PC-3 (cell line): ENCODE measurements at regions of chr19 and their contacts with region 1.

Region 1: GRCh38 chr19:5904352-5905113 is at the start of gene VMAC:
- DNase-seq: peak; percentile 100
- ATAC-seq: peak; percentile 78
- H3K4me3 ChIP-seq: peak within 1 kb of the TSS; percentile 94
- H3K27ac ChIP-seq: peak within 1 kb of the TSS; percentile 82
- H3K4me1 ChIP-seq: peaks cover 9% of the 10 kb centered on the region
- H3K27me3 ChIP-seq: no peaks in the 10 kb centered on the region
- CTCF ChIP-seq: no peak
- total RNA-seq, gene VMAC: 7.8 and 8.3 TPM in 2 replicates

Region 2: GRCh38 chr19:5719961-5720790 is 184.4 kb before region 1 on chr19 and contains the starts of genes CATSPERD and LONP1:
- CTCF ChIA-PET with region 1: no interaction called
- POLR2A ChIA-PET with region 1: interaction called, 19 read pairs
- intact Hi-C with region 1: no loop called
- DNase-seq: peak; percentile 100
- ATAC-seq: peak; percentile 89
- H3K4me3 ChIP-seq: peak within 1 kb of the TSS; percentile 95
- H3K27ac ChIP-seq: peak within 1 kb of the TSS; percentile 93
- H3K4me1 ChIP-seq: peaks cover 18% of the 10 kb centered on the region
- H3K27me3 ChIP-seq: no peaks in the 10 kb centered on the region
- CTCF ChIP-seq: peak; percentile 92
- total RNA-seq, gene CATSPERD: not detected in 2 replicates
- total RNA-seq, gene LONP1: 217 and 306 TPM in 2 replicates

Region 3: GRCh38 chr19:5775668-5776309 is 128.7 kb before region 1 on chr19:
- CTCF ChIA-PET with region 1: interaction called, 11 read pairs
- POLR2A ChIA-PET with region 1: no interaction called
- intact Hi-C with region 1: no loop called
- DNase-seq: peak; percentile 93
- ATAC-seq: peak; percentile 37; the same call in 1 of the 2 replicates
- H3K4me3 ChIP-seq: no peak overlapping the region
- H3K27ac ChIP-seq: no peak overlapping the region
- H3K4me1 ChIP-seq: no peaks in the 10 kb centered on the region
- H3K27me3 ChIP-seq: no peaks in the 10 kb centered on the region
- CTCF ChIP-seq: no peak

Region 4: DNA sequence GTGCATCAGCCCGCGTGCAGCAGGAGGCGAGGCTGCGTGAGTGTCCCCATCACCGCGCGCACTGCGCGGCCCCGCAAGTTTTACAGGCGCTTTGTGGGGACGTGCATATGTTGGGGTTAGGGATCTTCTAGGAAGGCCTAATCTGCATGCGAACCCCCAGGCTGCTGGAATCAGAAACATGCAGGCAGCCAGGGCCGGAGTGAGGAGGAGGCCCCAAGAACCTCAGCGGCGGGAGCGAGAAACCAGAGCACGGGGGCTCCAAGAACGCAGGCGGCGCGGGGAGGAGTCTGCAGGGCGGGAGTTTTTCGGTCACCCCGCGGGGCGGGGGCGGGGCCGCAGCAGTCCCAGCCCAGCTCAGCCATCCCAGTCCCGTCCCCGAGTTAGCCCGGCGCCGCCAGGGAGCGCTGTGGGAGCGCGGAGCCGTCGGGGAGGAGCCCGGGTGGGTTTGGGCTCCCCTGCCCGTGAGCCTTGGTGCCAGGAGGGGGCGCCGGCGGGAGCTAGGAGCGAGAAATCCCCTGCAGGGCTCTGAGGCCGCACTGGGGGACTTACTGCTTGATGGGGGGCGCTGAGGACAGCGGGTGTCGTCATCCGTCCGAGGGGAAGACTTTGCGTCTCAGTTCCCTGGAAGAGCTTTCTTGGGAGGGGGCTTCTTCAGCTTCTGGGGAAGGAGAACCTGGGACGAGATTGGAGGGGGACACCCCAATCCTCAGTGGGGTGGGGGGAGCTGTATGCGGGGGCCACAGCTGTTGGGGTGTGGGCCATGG is 100.6 kb before region 1 on chr19:
- CTCF ChIA-PET with region 1: interaction called, 27 read pairs
- POLR2A ChIA-PET with region 1: no interaction called
- intact Hi-C with region 1: no loop called
- DNase-seq: peak; percentile 98
- ATAC-seq: peak; percentile 91
- H3K4me3 ChIP-seq: peak overlapping the region; percentile 58
- H3K27ac ChIP-seq: no peak overlapping the region
- H3K4me1 ChIP-seq: peaks cover 12% of the 10 kb centered on the region
- H3K27me3 ChIP-seq: no peaks in the 10 kb centered on the region
- CTCF ChIP-seq: peak; percentile 100

Region 5: DNA sequence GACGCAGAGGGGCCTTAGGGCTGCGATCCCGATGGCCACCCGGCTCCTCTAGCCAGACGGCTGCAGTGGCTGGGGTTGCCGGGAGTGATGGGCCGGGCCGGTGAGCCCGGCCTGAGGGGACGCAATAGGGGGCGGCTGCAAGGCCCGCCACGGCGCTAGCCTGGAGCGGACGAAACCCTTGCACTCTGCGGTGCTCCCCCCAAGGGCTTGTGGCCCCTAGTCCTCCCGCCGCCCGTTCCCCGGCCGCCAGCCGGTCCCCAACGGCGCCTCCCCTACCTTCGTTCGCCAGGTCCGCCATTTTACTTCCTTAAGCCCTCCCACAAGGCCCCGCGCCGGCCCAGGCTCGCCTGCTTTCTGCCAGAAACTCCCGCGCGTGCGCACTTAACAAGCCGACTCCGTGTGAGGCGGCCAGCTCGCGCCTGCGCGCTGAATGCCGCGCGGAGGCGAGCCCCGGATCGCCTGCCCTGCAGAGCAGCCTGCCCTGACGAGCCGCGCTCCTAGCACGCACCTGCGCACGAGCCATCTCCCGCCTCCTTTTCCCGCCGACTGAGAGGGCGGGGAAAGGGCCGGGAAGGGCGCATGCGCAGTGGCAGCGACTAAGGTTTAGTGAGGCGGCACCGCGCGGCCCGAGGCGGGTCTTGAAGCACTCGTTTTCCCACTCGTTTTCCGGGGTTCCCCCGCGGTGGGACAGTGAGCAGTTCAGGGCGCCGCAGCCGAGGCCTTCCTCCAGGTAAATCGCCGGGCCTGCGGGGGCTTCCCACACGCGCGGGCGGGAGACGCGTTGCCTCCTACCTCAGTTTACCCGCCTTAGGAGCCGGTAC is 73.5 kb after region 1 on chr19 and contains the start of gene RANBP3:
- CTCF ChIA-PET with region 1: no interaction called
- POLR2A ChIA-PET with region 1: no interaction called
- intact Hi-C with region 1: loop called (anchors 2 kb)
- DNase-seq: peak; percentile 100
- ATAC-seq: peak; percentile 91
- H3K4me3 ChIP-seq: peak within 1 kb of the TSS; percentile 84
- H3K27ac ChIP-seq: peak within 1 kb of the TSS; percentile 54
- H3K4me1 ChIP-seq: peaks cover 48% of the 10 kb centered on the region
- H3K27me3 ChIP-seq: no peaks in the 10 kb centered on the region
- CTCF ChIP-seq: no peak
- total RNA-seq, gene RANBP3: 114 and 153 TPM in 2 replicates

Region 6: DNA sequence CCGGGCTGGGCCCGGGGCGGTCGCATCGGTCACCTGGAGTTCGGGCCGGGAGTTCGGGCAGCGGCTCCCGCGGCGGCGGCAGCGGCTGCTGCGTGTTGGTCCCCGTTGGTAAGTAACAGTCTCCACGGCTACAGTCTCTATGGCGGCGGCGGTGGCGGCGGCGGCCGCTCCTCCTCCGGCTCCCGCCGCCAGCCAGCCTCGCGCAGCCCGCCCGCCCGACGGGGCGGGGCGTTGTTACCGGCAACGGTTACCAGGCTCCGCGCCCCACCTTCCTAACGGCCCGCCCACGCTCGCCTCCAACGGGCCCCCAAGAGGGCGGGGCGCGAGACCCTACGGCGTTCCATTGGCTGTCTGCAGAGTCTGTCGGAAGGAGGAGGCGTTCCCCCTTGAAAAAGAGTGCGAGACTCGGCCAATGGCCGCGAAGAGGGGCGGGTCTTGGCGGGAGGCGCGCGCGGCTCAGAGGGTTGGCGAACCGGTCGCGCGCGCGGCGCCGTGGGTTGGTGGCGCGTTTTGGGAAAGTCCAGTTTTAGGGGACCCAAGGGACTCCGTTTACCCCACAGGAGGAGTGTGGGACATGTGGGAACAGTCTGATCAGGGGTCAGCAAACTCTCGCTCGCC is 205.9 kb after region 1 on chr19 and contains the start of gene RFX2:
- CTCF ChIA-PET with region 1: no interaction called
- POLR2A ChIA-PET with region 1: no interaction called
- intact Hi-C with region 1: loop called (anchors 1 kb)
- DNase-seq: peak; percentile 100
- ATAC-seq: peak; percentile 98
- H3K4me3 ChIP-seq: peak within 1 kb of the TSS; percentile 70
- H3K27ac ChIP-seq: no peak within 1 kb of the TSS
- H3K4me1 ChIP-seq: peaks cover 12% of the 10 kb centered on the region
- H3K27me3 ChIP-seq: no peaks in the 10 kb centered on the region
- CTCF ChIP-seq: no peak
- total RNA-seq, gene RFX2: 10.5 and 11.3 TPM in 2 replicates